Posterior vena cava (tissue), 2 donors: ENCODE measurements at regions of chr6 and their contacts with region 1.

Region 1: GRCh38 chr6:39166189-39166911 is 51.4 kb upstream of the SAYSD1 start:
- DNase-seq: peak; percentile 94

Region 2: GRCh38 chr6:39189915-39190544 is 23.7 kb after region 1 on chr6:
- intact Hi-C with region 1: no loop called
- DNase-seq: peak; percentile 86

Region 3: GRCh38 chr6:39302669-39303424 is 136.5 kb after region 1 on chr6:
- intact Hi-C with region 1: loop called (anchors 2 kb)
- DNase-seq: peak; percentile 96